K562 (cell line): ENCODE measurements at regions of chr19 and their contacts with region 1.

Region 1: GRCh38 chr19:10936661-10937084 is 8.1 kb downstream of the TIMM29 start:
- DNase-seq: peak; percentile 60 to 83 (median 72)
- ATAC-seq: peak; percentile 83
- H3K4me3 ChIP-seq: no peak overlapping the region
- H3K27ac ChIP-seq: no peak overlapping the region
- H3K4me1 ChIP-seq: peaks cover 18 to 20% of the 10 kb centered on the region in 2 experiments
- H3K27me3 ChIP-seq: no peaks in the 10 kb centered on the region
- CTCF ChIP-seq: peak; percentile 67 to 79 (median 72)
- EP300 ChIP-seq: no peak
- POLR2A ChIP-seq: no peak
- RAD21 ChIP-seq: peak; percentile 54 to 73

Region 2: DNA sequence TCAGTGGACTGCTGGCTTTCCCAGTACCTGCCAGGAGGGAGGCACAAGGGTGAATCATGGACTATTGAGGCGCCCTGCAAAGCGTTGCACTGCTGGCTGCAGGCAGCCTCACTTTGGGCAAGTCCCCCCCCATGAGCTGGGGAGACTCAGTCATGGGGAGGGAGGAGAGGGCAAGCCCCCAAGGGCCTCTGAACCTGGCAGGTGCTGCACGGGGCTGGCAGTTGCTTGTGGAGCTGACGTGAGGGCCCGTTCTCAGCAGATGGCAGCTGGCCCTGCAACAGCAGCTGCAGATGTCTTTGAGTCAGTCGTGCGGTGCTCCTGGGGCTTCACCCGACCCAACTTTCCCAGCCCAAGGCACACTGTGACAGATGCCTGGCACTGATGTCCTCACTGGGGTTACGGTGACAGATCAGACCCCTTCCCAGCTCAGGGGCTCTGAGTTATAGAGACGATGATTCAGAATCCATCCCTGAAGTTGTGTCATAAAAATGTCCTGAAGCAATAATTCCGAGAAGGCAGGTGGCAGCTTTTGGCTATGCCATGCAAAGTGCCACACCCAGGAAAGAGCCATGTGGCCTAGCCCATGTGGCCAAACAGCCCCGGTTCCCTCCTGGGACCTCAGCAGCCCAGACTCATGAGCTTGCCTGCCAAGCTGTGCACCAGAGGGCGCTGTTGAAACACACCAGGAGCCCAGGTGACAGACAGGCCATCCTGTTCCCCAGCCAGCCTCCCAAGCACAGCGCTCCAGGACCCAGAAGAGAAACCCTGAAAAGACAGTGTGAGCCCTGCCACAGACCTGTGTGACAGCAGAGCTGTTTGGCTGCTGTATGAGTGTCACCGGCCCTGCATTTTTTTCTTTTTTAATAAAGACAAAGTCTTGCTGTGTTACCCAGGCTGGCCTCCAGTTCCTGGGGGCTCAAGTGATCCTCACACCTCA is 99.0 kb after region 1 on chr19:
- CTCF ChIA-PET with region 1: interaction called, 3 read pairs
- POLR2A ChIA-PET with region 1: interaction called, 3 read pairs
- in situ Hi-C with region 1: no loop called
- intact Hi-C with region 1: loop called (anchors 5 kb)
- DNase-seq: peak; percentile 77 to 92 (median 86)
- ATAC-seq: peak; percentile 99
- H3K4me3 ChIP-seq: no peak overlapping the region
- H3K27ac ChIP-seq: no peak overlapping the region
- H3K4me1 ChIP-seq: peaks cover 0 to 13% of the 10 kb centered on the region in 2 experiments; a peak in 1 of 5 replicates
- H3K27me3 ChIP-seq: no peaks in the 10 kb centered on the region
- CTCF ChIP-seq: peak; percentile 86 to 93 (median 89)
- EP300 ChIP-seq: no peak
- POLR2A ChIP-seq: no peak
- RAD21 ChIP-seq: peak; percentile 85 to 91